Psoas muscle (tissue), 8 donors: ENCODE measurements at regions of chr19 and their contacts with region 1.

Region 1: DNA sequence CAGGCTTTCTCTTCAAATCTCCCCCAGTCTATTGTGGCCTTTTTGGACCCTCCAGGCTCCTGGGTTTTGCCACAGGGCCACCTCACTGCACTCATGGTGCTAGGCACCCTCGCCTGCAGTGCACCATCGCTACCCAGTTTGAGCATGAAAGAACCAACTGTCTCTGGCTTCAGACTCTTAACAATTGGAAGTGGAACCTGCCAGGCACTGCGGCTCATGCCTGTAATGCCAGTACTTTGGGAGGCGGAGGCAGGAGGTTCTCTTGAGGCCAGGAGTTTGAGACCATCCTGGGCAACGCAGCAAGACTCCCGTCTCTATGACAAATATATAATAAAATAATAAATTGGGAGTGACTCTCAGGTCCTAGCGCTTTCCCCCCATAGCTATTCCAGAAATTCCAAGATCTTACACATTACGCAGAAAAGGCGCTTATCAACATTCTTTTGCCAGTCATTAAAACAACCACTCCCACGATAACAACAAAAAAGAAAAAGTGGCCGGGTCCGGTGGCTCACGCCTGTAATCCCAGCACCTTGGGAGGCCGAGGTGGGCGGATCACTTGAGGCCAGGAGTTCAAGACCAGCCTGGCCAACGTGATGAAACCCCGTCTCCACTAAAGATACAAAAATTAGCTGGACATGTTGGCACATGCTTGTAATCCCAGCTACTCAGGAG is 12.4 kb upstream of the TNFAIP8L1 start:
- DNase-seq: no peak
- ATAC-seq: no peak
- H3K4me3 ChIP-seq: no peak overlapping the region
- H3K27ac ChIP-seq: no peak overlapping the region
- H3K4me1 ChIP-seq: no peaks in the 10 kb centered on the region
- H3K27me3 ChIP-seq: peaks cover 0 to 4% (median 0%) of the 10 kb centered on the region in 3 donors
- CTCF ChIP-seq: no peak

Region 2: GRCh38 chr19:4654437-4655361 is 27.8 kb after region 1 on chr19:
- intact Hi-C with region 1: loop called in 1 of 2 experiments (anchors 1 kb)
- DNase-seq: no peak
- ATAC-seq: peak; percentile 20 to 51 (median 36)
- H3K4me3 ChIP-seq: no peak overlapping the region
- H3K27ac ChIP-seq: no peak overlapping the region
- H3K4me1 ChIP-seq: peaks cover 8% of the 10 kb centered on the region
- H3K27me3 ChIP-seq: no peaks in the 10 kb centered on the region
- CTCF ChIP-seq: no peak

Region 3: GRCh38 chr19:4723367-4724187 is 96.7 kb after region 1 on chr19 and contains the start of gene DPP9:
- intact Hi-C with region 1: no loop called
- DNase-seq: peak; percentile 98 to 99
- ATAC-seq: peak; percentile 91 to 97 (median 95)
- H3K4me3 ChIP-seq: peak within 1 kb of the TSS; percentile 97
- H3K27ac ChIP-seq: peak within 1 kb of the TSS; percentile 96
- H3K4me1 ChIP-seq: peaks cover 27% of the 10 kb centered on the region
- H3K27me3 ChIP-seq: no peaks in the 10 kb centered on the region
- CTCF ChIP-seq: peak; percentile 17
- total RNA-seq, gene DPP9: 55.9 to 97.4 (median 78.6) TPM

Region 4: GRCh38 chr19:4844348-4845179 is 217.7 kb after region 1 on chr19:
- intact Hi-C with region 1: no loop called
- DNase-seq: no peak
- ATAC-seq: no peak
- H3K4me3 ChIP-seq: no peak overlapping the region
- H3K27ac ChIP-seq: no peak overlapping the region
- H3K4me1 ChIP-seq: peaks cover 5% of the 10 kb centered on the region
- H3K27me3 ChIP-seq: no peaks in the 10 kb centered on the region
- CTCF ChIP-seq: no peak

Region 5: DNA sequence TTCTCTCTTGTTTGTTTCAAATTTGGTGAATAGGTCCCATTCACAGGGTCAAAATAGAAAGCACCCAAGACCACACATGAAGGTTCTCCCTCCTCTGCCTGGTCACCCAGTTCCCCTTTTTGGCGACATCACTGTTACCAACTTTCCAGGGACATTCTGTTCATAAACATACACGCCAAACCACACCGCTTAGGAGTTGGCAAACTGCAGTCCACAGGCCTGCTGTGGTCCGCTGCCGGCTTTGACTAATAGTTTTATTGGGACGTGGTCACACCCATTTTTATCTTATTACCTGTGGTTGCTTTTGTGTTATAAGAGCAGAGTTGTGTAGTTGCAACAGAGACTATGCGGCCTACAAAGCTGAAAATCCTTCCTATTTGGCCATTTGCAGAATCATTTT is 306.6 kb after region 1 on chr19:
- intact Hi-C with region 1: no loop called
- DNase-seq: no peak
- ATAC-seq: peak in 3 of 4 donors; percentile 73 to 83 (median 82)
- H3K4me3 ChIP-seq: no peak overlapping the region
- H3K27ac ChIP-seq: no peak overlapping the region
- H3K4me1 ChIP-seq: no peaks in the 10 kb centered on the region
- H3K27me3 ChIP-seq: no peaks in the 10 kb centered on the region
- CTCF ChIP-seq: no peak